GM12878 (cell line): ENCODE measurements at regions of chr12 and their contacts with region 1.

Region 1: DNA sequence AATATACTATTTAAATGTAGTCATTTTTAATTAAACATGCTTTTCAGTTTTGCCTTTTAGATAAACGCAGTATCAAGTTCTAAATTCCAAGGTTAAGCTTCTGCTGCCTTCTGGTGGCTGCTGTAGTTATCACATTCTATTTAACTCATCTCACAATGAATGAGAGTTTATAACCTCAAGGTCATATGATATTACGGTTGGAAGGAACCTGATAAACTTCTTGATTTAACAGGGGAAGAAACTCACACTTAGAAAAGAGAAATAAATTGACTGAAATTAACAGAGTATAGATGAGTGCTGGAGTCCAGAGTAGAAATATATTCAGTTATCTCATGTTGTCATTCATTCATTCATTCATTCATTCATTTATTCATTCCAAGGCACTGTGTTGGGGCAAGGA is 31.9 kb downstream of the GUCY2C start:
- DNase-seq: no peak
- ATAC-seq: peak; percentile 71
- H3K4me3 ChIP-seq: no peak overlapping the region
- H3K27ac ChIP-seq: no peak overlapping the region
- H3K4me1 ChIP-seq: no peaks in the 10 kb centered on the region
- H3K27me3 ChIP-seq: no peaks in the 10 kb centered on the region
- CTCF ChIP-seq: peak; percentile 50 to 72 (median 56); a peak in 5 of 6 replicates
- EP300 ChIP-seq: no peak
- POLR2A ChIP-seq: no peak
- RAD21 ChIP-seq: peak; percentile 93

Region 2: GRCh38 chr12:14185427-14186192 is 478.9 kb before region 1 on chr12:
- CTCF ChIA-PET with region 1: interaction called, 17 read pairs
- POLR2A ChIA-PET with region 1: no interaction called
- RAD21 ChIA-PET with region 1: interaction called, 3 read pairs
- SMC1A ChIA-PET with region 1: interaction called, 4 read pairs
- in situ Hi-C with region 1: no loop called
- intact Hi-C with region 1: loop called (anchors 5 kb)
- DNase-seq: no peak
- ATAC-seq: peak; percentile 91
- H3K4me3 ChIP-seq: no peak overlapping the region
- H3K27ac ChIP-seq: no peak overlapping the region
- H3K4me1 ChIP-seq: peaks cover 4% of the 10 kb centered on the region; the same call in 1 of the 2 replicates
- H3K27me3 ChIP-seq: no peaks in the 10 kb centered on the region
- CTCF ChIP-seq: peak; percentile 65 to 85 (median 68)
- EP300 ChIP-seq: no peak
- POLR2A ChIP-seq: no peak
- RAD21 ChIP-seq: peak; percentile 67

Region 3: DNA sequence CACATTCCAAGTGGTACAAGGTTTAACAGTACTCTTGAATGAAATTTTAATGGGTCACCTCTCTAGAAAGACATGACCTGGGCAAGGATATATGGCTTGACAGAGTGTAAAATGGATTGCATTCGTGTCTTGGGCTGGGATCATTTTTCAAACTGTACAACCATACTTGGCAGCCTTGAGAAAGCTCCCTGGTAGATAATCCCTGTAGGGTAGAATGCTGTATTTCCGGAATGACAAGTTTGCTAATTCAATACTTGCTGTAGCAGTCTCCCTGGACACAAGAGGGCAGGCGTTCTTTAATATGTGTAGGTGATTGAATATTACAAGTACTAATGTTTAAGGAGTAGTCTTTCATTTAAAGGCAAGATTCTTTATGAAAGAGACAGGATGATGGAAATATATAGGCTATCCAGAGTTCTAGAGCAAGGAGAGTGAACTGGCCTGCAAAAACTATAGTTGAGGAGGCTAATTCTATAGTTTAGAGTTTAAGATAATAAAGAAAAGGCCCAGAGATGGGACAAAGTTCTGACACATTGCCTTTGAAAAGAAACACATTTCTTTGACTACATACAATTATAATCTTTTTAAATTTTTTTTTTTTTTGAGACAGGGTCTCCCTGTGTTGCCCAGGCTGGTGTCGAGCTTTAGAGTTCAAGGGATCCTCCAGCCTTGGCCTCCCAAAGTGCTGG is 150.2 kb before region 1 on chr12:
- CTCF ChIA-PET with region 1: interaction called, 6 read pairs
- POLR2A ChIA-PET with region 1: no interaction called
- RAD21 ChIA-PET with region 1: interaction called, 3 read pairs
- SMC1A ChIA-PET with region 1: interaction called, 4 read pairs
- in situ Hi-C with region 1: no loop called
- intact Hi-C with region 1: loop called (anchors 5 kb)
- DNase-seq: no peak
- ATAC-seq: peak; percentile 72
- H3K4me3 ChIP-seq: no peak overlapping the region
- H3K27ac ChIP-seq: no peak overlapping the region
- H3K4me1 ChIP-seq: no peaks in the 10 kb centered on the region
- H3K27me3 ChIP-seq: no peaks in the 10 kb centered on the region
- CTCF ChIP-seq: peak; percentile 37 to 48 (median 42); a peak in 5 of 6 replicates
- EP300 ChIP-seq: no peak
- POLR2A ChIP-seq: no peak
- RAD21 ChIP-seq: peak; percentile 79

Region 4: GRCh38 chr12:14577344-14577743 is 87.2 kb before region 1 on chr12:
- CTCF ChIA-PET with region 1: interaction called, 8 read pairs
- POLR2A ChIA-PET with region 1: no interaction called
- RAD21 ChIA-PET with region 1: no interaction called
- SMC1A ChIA-PET with region 1: interaction called, 7 read pairs
- in situ Hi-C with region 1: no loop called
- intact Hi-C with region 1: loop called (anchors 5 kb)
- DNase-seq: peak; percentile 25
- ATAC-seq: peak; percentile 72
- H3K4me3 ChIP-seq: no peak overlapping the region
- H3K27ac ChIP-seq: no peak overlapping the region
- H3K4me1 ChIP-seq: peaks cover 2% of the 10 kb centered on the region; the same call in 1 of the 2 replicates
- H3K27me3 ChIP-seq: no peaks in the 10 kb centered on the region
- CTCF ChIP-seq: no peak
- EP300 ChIP-seq: no peak
- POLR2A ChIP-seq: no peak
- RAD21 ChIP-seq: no peak

Region 5: GRCh38 chr12:14696265-14696741 is 31.8 kb after region 1 on chr12 and contains the start of gene GUCY2C:
- CTCF ChIA-PET with region 1: no interaction called
- POLR2A ChIA-PET with region 1: no interaction called
- RAD21 ChIA-PET with region 1: no interaction called
- SMC1A ChIA-PET with region 1: no interaction called
- in situ Hi-C with region 1: no loop called
- intact Hi-C with region 1: no loop called
- DNase-seq: no peak
- ATAC-seq: no peak
- H3K4me3 ChIP-seq: no peak within 1 kb of the TSS
- H3K27ac ChIP-seq: no peak within 1 kb of the TSS
- H3K4me1 ChIP-seq: no peaks in the 10 kb centered on the region
- H3K27me3 ChIP-seq: no peaks in the 10 kb centered on the region
- CTCF ChIP-seq: no peak
- EP300 ChIP-seq: no peak
- POLR2A ChIP-seq: no peak
- RAD21 ChIP-seq: no peak
- polyA plus RNA-seq, gene GUCY2C: 0.57 to 0.60 TPM